Calu3 (cell line): ENCODE measurements at regions of chr4 and their contacts with region 1.

Region 1: DNA sequence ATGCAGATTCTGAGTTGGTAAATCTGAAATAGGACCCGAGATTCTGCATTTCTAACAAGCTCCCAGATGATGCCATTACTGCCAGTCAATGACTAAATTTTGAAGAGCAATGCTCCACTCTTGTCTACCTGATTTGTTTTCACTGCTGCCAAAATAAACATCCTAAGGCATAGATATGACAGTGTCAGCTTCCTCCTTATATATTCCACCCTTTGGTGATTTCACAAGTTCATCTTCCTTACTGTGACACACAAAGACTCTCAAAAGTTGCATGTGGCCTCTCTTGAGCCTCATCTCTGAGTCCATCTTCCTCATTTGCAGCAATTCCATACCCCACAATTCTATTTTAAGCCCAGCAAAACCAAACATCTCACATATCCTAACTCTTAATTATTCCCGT is 110.9 kb downstream of the FBXW7 start:
- DNase-seq: no peak
- H3K4me3 Mint-ChIP-seq: no peak overlapping the region
- H3K27ac Mint-ChIP-seq: peak overlapping the region; percentile 2
- H3K4me1 Mint-ChIP-seq: peaks cover 20% of the 10 kb centered on the region
- H3K27me3 Mint-ChIP-seq: no peaks in the 10 kb centered on the region
- CTCF ChIP-seq: no peak

Region 2: DNA sequence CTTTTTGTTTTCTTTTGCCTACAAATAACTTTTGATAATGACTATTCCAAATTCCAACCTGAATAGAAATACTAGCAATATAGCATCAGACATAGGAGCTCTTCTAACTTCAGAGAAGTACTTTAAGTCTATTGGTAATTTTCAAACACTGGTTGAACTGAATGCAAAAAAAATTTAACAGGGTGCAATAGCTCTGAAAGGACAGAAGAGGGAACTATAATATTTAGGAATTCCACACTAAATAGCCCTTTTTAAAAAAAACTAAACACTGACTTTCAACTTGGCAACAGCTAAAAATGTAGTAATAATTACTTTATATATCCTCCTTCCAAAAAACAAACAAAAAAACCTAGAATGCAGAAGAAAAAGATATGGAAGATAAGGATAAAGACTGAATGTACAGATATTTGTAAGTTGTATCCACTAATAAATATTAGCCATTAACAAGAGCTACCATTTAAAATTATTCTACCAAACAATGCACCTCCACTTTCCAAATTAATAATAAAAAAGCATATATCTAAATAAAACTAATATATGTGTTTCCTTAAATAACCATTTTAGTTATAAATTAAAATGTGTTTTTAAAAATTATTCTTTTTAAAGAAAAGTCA is 29.5 kb after region 1 on chr4:
- CTCF ChIA-PET with region 1: no interaction called
- intact Hi-C with region 1: loop called (anchors 1 kb)
- DNase-seq: no peak
- H3K4me3 Mint-ChIP-seq: no peak overlapping the region
- H3K27ac Mint-ChIP-seq: no peak overlapping the region
- H3K4me1 Mint-ChIP-seq: peaks cover 42% of the 10 kb centered on the region
- H3K27me3 Mint-ChIP-seq: no peaks in the 10 kb centered on the region
- CTCF ChIP-seq: no peak